HAP-1 (cell line): ENCODE measurements at regions of chr12 and their contacts with region 1.

Region 1: GRCh38 chr12:53031617-53032016 is 18.2 kb upstream of the TNS2 start:
- DNase-seq: no peak
- H3K4me3 ChIP-seq: no peak overlapping the region
- H3K4me1 ChIP-seq: no peaks in the 10 kb centered on the region
- H3K27me3 ChIP-seq: no peaks in the 10 kb centered on the region

Region 2: GRCh38 chr12:53461059-53461458 is 429.4 kb after region 1 on chr12:
- in situ Hi-C with region 1: loop called (anchors 5 kb)
- DNase-seq: no peak
- H3K4me3 ChIP-seq: no peak overlapping the region
- H3K4me1 ChIP-seq: no peaks in the 10 kb centered on the region
- H3K27me3 ChIP-seq: no peaks in the 10 kb centered on the region